Right ventricle myocardium inferior (tissue), 1 donor: ENCODE measurements at regions of chr9 and their contacts with region 1.

Region 1: DNA sequence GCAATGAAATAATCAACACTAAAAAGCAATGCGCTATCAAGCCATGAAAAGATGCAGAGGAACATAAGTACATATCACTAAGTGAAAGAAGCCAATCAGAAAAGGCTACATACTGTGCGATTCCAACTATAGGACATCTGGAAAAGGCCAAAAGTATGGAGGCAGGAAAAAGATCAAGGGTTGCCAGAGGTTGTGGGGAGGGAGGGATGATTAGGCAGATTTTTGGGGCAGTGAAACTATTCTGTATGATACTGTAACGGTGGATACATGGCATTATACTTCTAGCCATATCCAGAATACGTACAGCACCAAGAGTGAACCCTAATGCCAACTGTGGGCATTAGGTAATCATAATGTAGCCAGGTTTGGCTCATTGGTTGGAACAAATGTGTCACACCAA is 50.0 kb upstream of the FAM120AOS start:
- DNase-seq: no peak
- ATAC-seq: no peak

Region 2: DNA sequence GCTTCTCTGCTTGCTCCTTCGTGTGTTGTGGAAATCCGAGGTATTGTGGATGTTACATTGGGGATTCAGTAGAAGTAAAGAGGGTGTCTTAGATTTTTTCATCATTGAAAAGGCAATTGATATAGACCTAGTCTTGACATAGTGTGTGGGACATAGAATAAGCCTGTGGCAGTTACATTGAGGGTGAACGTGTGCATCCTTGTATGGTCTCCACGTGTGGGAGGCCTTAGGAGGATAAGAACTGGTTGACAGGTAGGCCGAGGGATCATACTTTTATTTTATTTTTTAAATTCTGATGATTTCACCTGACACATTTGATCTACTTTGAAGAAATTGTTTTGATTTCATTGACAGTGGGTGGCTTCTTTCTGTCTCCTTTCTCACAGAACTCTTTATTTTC is 33.0 kb before region 1 on chr9:
- intact Hi-C with region 1: loop called (anchors 1 kb)
- DNase-seq: no peak
- ATAC-seq: no peak